ENCODE measurements at regions of chr4 and their contacts with region 1.

Region 1: GRCh38 chr4:109302361-109303139 is at the start of gene COL25A1:
- DNase-seq: peak; percentile 94
- ATAC-seq: peak; percentile 93
- H3K4me3 Mint-ChIP-seq: peak within 1 kb of the TSS; percentile 70
- H3K27ac Mint-ChIP-seq: peak within 1 kb of the TSS; percentile 73
- H3K4me1 Mint-ChIP-seq: peaks cover 16% of the 10 kb centered on the region
- H3K27me3 Mint-ChIP-seq: peaks cover 43% of the 10 kb centered on the region
- CTCF ChIP-seq: no peak
- total RNA-seq, gene COL25A1: 6.6 to 9.3 TPM (median 8.0 TPM) in 3 replicates

Region 2: DNA sequence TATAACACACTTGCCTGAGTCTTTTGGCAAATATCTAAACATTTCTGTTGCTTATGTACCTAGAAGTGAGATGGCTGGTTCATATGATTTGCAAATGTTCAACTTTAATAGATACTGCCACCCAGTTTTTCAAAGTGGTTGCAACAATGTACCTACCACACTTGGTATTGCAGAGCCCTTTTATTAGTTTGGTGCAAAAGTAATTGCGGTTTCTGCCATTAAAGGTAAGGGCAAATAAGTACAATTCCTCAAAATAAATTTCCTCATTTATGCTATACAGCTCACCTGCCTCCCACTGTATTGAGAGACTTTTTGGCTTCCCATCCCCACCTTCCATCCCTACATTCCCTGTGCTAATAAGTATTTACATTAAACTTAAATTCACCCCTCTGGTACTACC is 47.6 kb after region 1 on chr4:
- CTCF ChIA-PET with region 1: no interaction called
- POLR2A ChIA-PET with region 1: no interaction called
- DNase-seq: no peak
- ATAC-seq: no peak
- H3K4me3 Mint-ChIP-seq: no peak overlapping the region
- H3K27ac Mint-ChIP-seq: no peak overlapping the region
- H3K4me1 Mint-ChIP-seq: no peaks in the 10 kb centered on the region
- H3K27me3 Mint-ChIP-seq: no peaks in the 10 kb centered on the region
- CTCF ChIP-seq: no peak

Region 3: DNA sequence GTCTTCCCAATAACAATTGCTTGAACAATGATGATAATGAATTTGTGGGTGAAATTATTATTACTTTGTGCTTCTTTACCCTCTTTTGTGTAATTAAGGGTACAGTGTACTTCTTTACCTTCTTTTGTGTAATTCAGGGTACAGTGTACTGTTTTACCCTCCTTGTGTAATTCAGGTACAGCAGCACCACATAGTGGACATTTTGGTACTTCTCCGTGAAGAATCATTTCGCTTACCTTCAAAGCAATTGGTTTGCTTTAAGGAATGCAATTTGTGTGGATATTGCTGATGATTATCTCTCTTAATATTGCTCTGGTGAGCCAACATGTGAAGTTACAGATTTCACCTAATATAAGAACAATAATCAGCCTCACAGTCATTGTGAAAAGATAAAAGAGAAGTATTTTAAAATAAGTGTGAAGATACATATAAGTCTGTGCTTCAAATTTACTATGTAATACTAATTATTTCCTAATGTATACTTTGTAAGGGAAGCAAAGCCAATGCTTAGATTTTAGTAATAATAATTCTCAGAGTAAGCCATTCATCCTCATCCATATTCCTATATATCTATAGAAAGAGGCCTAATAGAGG is 103.9 kb after region 1 on chr4:
- CTCF ChIA-PET with region 1: interaction called, 3 read pairs
- POLR2A ChIA-PET with region 1: interaction called, 12 read pairs
- DNase-seq: no peak
- ATAC-seq: peak; percentile 65
- H3K4me3 Mint-ChIP-seq: no peak overlapping the region
- H3K27ac Mint-ChIP-seq: no peak overlapping the region
- H3K4me1 Mint-ChIP-seq: peaks cover 34% of the 10 kb centered on the region
- H3K27me3 Mint-ChIP-seq: no peaks in the 10 kb centered on the region
- CTCF ChIP-seq: 0 out of 2 replicates have a peak, but pooled peaks have one; percentile 41